HCT116 (cell line): ENCODE measurements at regions of chr6 and their contacts with region 1.

Region 1: GRCh38 chr6:34027445-34027936 is 118.4 kb downstream of the GRM4 start:
- DNase-seq: peak; percentile 15
- ATAC-seq: peak; percentile 96
- H3K4me3 ChIP-seq: no peak overlapping the region
- H3K27ac ChIP-seq: no peak overlapping the region; the same call in 1 of the 2 replicates
- H3K4me1 ChIP-seq: no peaks in the 10 kb centered on the region
- H3K27me3 ChIP-seq: no peaks in the 10 kb centered on the region
- CTCF ChIP-seq: peak; percentile 88 to 96 (median 95)
- POLR2A ChIP-seq: no peak
- RAD21 ChIP-seq: peak; percentile 95

Region 2: GRCh38 chr6:33744001-33744848 is 283.3 kb before region 1 on chr6:
- CTCF ChIA-PET with region 1: interaction called, 14 read pairs
- POLR2A ChIA-PET with region 1: no interaction called
- RAD21 ChIA-PET with region 1: no interaction called
- intact Hi-C with region 1: no loop called
- DNase-seq: peak; percentile 42
- ATAC-seq: peak; percentile 94
- H3K4me3 ChIP-seq: no peak overlapping the region
- H3K27ac ChIP-seq: no peak overlapping the region
- H3K4me1 ChIP-seq: peaks cover 2 to 9% of the 10 kb centered on the region in 2 experiments; a peak in 3 of 4 replicates
- H3K27me3 ChIP-seq: peaks cover 6% of the 10 kb centered on the region; the same call in 1 of the 2 replicates
- CTCF ChIP-seq: peak; percentile 83 to 96 (median 95)
- POLR2A ChIP-seq: no peak
- RAD21 ChIP-seq: peak; percentile 86

Region 3: DNA sequence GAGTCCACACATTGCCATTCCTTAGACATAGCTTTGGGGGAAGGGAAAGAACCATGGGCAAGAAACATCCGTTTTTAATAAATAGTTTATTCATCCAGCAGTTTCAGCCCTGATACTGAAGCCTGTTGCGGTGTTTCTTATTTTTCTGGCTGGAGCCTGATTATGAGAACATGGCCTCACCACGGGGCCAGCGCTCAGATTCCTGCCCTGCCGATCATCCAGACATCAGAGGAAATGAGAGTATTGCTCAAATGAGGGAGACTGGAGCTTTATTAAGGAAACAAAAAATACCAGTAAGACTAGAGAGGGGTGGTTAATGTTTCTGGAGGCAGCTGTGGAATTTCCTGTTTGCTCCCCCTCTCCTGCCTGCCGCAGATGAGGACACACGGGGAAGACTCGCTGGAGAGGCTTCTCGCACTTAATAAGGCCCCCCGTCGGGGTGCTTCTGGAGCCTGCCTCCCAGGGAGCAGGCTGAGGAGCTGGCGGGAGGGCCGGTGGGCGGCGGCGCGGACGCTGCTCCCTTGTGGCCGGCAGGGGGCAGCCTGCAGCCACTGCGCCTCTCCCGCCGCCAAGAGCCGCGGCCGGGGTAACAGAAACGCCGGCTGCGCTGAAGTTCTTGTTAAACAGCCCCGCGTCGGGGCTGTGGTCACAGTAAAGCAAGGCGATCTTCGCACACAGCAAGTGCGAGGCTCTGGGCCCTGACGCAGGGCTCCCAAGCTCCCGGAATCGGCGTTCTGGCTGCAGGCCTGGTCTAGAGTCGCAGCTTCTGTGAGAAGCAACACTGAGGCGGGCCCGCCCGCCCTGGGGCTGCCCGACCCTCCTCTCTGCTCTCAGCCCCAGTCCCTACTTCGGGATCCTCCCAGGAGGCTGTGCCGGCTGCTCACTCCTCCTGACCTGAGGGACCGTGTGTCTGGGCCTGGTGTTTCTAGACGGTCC is 256.1 kb before region 1 on chr6:
- CTCF ChIA-PET with region 1: interaction called, 67 read pairs
- POLR2A ChIA-PET with region 1: interaction called, 3 read pairs
- RAD21 ChIA-PET with region 1: interaction called, 3 to 7 read pairs
- intact Hi-C with region 1: loop called (anchors 1 kb)
- DNase-seq: peak; percentile 19
- ATAC-seq: peak; percentile 80
- H3K4me3 ChIP-seq: no peak overlapping the region
- H3K27ac ChIP-seq: peak overlapping the region; percentile 36
- H3K4me1 ChIP-seq: peaks cover 12 to 27% of the 10 kb centered on the region in 2 experiments
- H3K27me3 ChIP-seq: no peaks in the 10 kb centered on the region
- CTCF ChIP-seq: peak; percentile 80 to 92 (median 86)
- POLR2A ChIP-seq: no peak
- RAD21 ChIP-seq: peak; percentile 88

Region 4: DNA sequence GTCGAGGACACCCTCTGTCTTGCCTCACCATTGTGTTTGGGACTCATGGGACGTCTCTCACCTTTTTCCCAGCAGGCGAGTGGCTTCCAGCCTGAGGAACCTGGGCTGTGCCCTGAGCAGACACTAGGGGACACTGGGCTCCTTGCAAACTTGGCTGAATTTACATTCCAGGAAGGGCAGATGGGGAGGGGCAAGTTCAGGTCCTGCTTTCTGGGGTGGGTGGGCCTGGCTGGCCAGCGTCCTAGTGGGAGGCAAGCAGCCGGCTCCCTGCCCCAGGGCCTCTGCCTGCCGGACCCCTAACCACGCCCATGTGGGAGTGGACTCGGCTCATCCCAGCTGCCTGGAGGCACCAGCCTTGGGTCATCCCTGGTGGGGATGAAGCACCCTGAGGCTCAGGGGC is 175.5 kb before region 1 on chr6:
- CTCF ChIA-PET with region 1: interaction called, 8 read pairs
- POLR2A ChIA-PET with region 1: no interaction called
- RAD21 ChIA-PET with region 1: interaction called in 1 of 2 experiments, 4 read pairs
- intact Hi-C with region 1: loop called (anchors 1 kb)
- DNase-seq: peak; percentile 31
- ATAC-seq: peak; percentile 92
- H3K4me3 ChIP-seq: no peak overlapping the region
- H3K27ac ChIP-seq: no peak overlapping the region
- H3K4me1 ChIP-seq: peaks cover 0 to 9% of the 10 kb centered on the region in 2 experiments; a peak in 1 of 4 replicates
- H3K27me3 ChIP-seq: no peaks in the 10 kb centered on the region
- CTCF ChIP-seq: peak; percentile 65 to 76 (median 66); a peak in 5 of 6 replicates
- POLR2A ChIP-seq: no peak
- RAD21 ChIP-seq: peak; percentile 87

Region 5: GRCh38 chr6:33967966-33968724 is 59.3 kb before region 1 on chr6:
- CTCF ChIA-PET with region 1: interaction called, 16 read pairs
- POLR2A ChIA-PET with region 1: no interaction called
- RAD21 ChIA-PET with region 1: no interaction called
- intact Hi-C with region 1: loop called (anchors 2 kb)
- DNase-seq: peak; percentile 13
- ATAC-seq: peak; percentile 97
- H3K4me3 ChIP-seq: no peak overlapping the region
- H3K27ac ChIP-seq: no peak overlapping the region
- H3K4me1 ChIP-seq: no peaks in the 10 kb centered on the region
- H3K27me3 ChIP-seq: no peaks in the 10 kb centered on the region
- CTCF ChIP-seq: peak; percentile 49 to 72 (median 71); a peak in 5 of 6 replicates
- POLR2A ChIP-seq: no peak
- RAD21 ChIP-seq: peak; percentile 69

Region 6: DNA sequence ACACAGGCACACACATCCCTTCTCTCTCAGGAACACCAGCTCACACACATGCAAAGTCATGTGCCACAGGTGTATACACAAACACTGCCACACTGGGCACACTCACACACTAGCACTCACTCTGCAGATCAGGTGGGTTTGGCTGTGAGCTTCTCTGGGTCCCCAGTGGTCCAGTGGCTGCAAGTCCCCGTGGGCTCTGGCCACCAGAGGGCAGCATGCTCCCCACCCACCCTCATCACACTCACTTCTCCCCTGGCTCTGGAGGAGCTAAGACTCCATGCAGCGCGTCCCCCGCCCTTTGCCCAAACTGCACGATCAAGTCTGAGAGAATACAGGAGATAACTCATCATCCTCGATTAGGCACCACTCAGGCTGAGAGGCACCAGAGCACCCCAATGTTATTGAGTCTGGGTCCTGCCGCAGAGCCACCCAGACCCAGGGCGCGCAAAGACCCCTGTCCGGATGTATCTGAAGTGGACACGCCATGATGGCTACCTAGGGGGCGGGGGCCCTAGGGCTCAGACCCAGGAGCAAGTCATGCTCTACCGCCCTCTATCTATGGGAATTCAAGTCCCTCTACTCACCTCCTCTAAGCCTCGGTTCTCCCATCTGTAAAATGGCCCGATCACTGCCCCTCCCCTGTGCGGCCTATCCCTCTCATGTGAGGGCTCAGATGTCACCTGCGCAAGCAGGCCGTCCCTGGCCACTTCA is 27.9 kb after region 1 on chr6:
- CTCF ChIA-PET with region 1: interaction called, 13 read pairs
- POLR2A ChIA-PET with region 1: no interaction called
- RAD21 ChIA-PET with region 1: no interaction called
- intact Hi-C with region 1: no loop called
- DNase-seq: peak; percentile 55
- ATAC-seq: peak; percentile 77
- H3K4me3 ChIP-seq: no peak overlapping the region
- H3K27ac ChIP-seq: no peak overlapping the region
- H3K4me1 ChIP-seq: peaks cover 8 to 21% of the 10 kb centered on the region in 2 experiments; a peak in 3 of 4 replicates
- H3K27me3 ChIP-seq: no peaks in the 10 kb centered on the region
- CTCF ChIP-seq: peak; percentile 61 to 93 (median 91)
- POLR2A ChIP-seq: no peak
- RAD21 ChIP-seq: peak; percentile 61

Region 7: DNA sequence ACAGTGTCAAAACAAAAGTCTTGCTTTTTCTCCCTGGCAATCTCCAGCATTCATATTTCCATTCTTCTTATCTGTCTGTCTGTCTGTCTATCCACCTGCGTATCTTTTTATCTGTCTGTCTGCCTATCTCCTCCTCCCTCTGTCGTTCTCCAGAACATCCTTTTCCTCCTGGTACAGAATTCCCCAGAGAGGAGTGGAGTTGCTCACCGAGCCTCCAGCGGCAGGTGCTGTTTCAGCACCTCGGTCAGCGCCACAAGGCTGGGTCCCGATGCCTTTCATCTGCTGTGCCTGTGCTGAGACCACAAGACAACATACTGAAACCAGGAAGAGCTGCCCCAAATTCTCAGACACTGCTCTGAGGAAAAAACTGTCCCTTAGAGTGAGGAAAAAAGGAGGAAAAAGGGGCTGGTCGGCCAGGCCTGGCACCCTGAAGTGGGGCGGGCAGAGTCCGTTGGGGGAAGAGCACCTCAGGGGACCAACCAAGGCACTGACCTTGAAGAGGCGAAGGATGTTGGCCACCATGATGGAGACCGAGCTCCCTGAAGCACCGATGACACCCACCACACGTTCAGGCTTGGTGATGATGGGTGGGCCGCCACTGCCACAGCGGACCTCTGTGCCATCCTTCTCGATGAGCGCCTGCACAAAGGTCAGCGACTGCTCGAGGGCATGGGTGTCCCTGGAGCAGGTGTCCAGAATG is 105.1 kb after region 1 on chr6:
- CTCF ChIA-PET with region 1: no interaction called
- POLR2A ChIA-PET with region 1: no interaction called
- RAD21 ChIA-PET with region 1: no interaction called
- intact Hi-C with region 1: no loop called
- DNase-seq: no peak
- ATAC-seq: no peak
- H3K4me3 ChIP-seq: no peak overlapping the region
- H3K27ac ChIP-seq: no peak overlapping the region
- H3K4me1 ChIP-seq: peaks cover 2 to 14% of the 10 kb centered on the region in 2 experiments; a peak in 2 of 4 replicates
- H3K27me3 ChIP-seq: 0 out of 2 replicates have a peak, but pooled peaks cover 4% of the 10 kb centered on the region
- CTCF ChIP-seq: no peak
- POLR2A ChIP-seq: no peak
- RAD21 ChIP-seq: no peak